Activated naive CD4-positive, alpha-beta T cell treated with anti-CD3 and anti-CD28 coated beads for 36 hours (primary cell): ENCODE measurements at regions of chr5 and their contacts with region 1.

Region 1: DNA sequence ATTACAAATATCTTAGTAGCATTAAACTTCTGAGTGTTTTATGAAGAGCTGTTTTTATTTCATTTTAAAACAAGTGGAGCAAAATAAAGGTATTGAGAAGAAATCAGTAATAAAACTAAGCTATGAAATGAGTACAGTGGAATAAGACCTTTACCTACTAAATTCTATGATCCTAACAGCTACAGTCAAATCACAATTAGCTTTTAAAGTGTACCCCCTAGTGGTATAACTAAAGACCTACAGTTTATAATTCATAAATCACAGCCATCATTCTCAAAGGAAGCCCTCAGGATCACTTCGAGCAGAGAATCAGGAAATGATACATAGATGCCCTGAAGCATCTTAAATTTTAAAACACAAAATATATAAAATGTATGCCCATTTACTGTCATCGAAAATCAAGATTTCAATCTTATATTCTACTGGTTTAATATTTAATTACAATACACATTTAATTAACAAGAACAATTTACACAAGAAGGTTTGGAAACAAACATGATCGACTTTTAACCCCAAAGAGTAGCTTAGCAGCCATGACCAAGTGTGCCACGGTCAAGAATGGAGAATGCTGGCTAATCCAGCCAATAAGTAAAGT is 12.3 kb downstream of the CCNH start:
- DNase-seq: no peak
- H3K4me3 Mint-ChIP-seq: no peak overlapping the region
- H3K27ac Mint-ChIP-seq: no peak overlapping the region
- H3K4me1 Mint-ChIP-seq: peaks cover 34% of the 10 kb centered on the region
- H3K27me3 Mint-ChIP-seq: no peaks in the 10 kb centered on the region

Region 2: GRCh38 chr5:86880785-86881492 is 519.5 kb before region 1 on chr5:
- CTCF ChIA-PET with region 1: interaction called, 5 read pairs
- intact Hi-C with region 1: loop called (anchors 1 kb)
- DNase-seq: peak; percentile 58
- H3K4me3 Mint-ChIP-seq: no peak overlapping the region
- H3K27ac Mint-ChIP-seq: no peak overlapping the region
- H3K4me1 Mint-ChIP-seq: no peaks in the 10 kb centered on the region
- H3K27me3 Mint-ChIP-seq: peaks cover 6% of the 10 kb centered on the region

Region 3: GRCh38 chr5:86986837-86987236 is 413.6 kb before region 1 on chr5:
- CTCF ChIA-PET with region 1: interaction called, 5 read pairs
- intact Hi-C with region 1: loop called (anchors 2 kb)
- DNase-seq: no peak
- H3K4me3 Mint-ChIP-seq: no peak overlapping the region
- H3K27ac Mint-ChIP-seq: no peak overlapping the region
- H3K4me1 Mint-ChIP-seq: no peaks in the 10 kb centered on the region
- H3K27me3 Mint-ChIP-seq: no peaks in the 10 kb centered on the region

Region 4: GRCh38 chr5:87048156-87048555 is 352.2 kb before region 1 on chr5:
- CTCF ChIA-PET with region 1: no interaction called
- intact Hi-C with region 1: loop called (anchors 1 kb)
- DNase-seq: no peak
- H3K4me3 Mint-ChIP-seq: no peak overlapping the region
- H3K27ac Mint-ChIP-seq: no peak overlapping the region
- H3K4me1 Mint-ChIP-seq: no peaks in the 10 kb centered on the region
- H3K27me3 Mint-ChIP-seq: no peaks in the 10 kb centered on the region

Region 5: GRCh38 chr5:87340716-87341115 is 59.7 kb before region 1 on chr5:
- CTCF ChIA-PET with region 1: no interaction called
- intact Hi-C with region 1: no loop called
- DNase-seq: no peak
- H3K4me3 Mint-ChIP-seq: peak overlapping the region; percentile 33
- H3K27ac Mint-ChIP-seq: peak overlapping the region; percentile 77
- H3K4me1 Mint-ChIP-seq: peaks cover 20% of the 10 kb centered on the region
- H3K27me3 Mint-ChIP-seq: no peaks in the 10 kb centered on the region

Region 6: DNA sequence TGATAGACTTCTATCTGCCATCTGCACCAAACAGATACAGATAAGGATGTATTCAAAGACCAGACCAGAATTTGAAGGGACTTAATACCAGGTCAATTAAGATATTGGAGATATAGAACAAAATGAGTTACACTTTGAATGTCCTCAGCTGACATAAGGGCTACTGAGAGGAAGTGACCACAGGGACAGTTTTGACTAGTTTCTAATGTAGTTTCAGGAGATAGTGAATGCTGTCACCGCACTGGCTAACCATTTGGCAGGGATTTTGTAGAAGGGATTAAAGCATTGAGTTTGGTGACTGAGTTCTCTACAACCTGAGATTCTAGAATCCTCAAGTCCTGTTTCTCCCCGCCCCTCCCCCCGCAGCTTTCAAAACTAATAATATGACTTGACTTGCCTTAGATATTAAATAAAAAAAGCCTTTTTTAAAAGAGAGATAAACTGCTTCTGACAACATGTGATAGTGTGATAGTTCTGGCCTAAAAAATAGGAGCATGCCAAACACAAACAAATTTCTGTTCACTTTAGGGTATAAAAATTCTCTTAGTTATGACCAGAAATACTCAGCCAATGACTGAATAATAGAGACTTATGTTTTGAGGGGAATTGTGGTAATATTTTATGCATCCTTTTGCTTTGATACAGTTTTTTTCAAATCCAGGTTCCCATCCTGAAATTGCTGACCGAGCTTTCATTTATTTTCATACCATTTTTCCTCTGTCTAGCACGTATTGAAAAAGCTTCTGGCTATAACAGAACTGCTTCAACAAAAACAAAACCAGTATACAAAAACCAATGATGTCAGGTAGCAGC is 10.1 kb before region 1 on chr5:
- CTCF ChIA-PET with region 1: interaction called, 19 read pairs
- intact Hi-C with region 1: no loop called
- DNase-seq: no peak
- H3K4me3 Mint-ChIP-seq: no peak overlapping the region
- H3K27ac Mint-ChIP-seq: peak overlapping the region; percentile 1
- H3K4me1 Mint-ChIP-seq: peaks cover 6% of the 10 kb centered on the region
- H3K27me3 Mint-ChIP-seq: no peaks in the 10 kb centered on the region

Region 7: DNA sequence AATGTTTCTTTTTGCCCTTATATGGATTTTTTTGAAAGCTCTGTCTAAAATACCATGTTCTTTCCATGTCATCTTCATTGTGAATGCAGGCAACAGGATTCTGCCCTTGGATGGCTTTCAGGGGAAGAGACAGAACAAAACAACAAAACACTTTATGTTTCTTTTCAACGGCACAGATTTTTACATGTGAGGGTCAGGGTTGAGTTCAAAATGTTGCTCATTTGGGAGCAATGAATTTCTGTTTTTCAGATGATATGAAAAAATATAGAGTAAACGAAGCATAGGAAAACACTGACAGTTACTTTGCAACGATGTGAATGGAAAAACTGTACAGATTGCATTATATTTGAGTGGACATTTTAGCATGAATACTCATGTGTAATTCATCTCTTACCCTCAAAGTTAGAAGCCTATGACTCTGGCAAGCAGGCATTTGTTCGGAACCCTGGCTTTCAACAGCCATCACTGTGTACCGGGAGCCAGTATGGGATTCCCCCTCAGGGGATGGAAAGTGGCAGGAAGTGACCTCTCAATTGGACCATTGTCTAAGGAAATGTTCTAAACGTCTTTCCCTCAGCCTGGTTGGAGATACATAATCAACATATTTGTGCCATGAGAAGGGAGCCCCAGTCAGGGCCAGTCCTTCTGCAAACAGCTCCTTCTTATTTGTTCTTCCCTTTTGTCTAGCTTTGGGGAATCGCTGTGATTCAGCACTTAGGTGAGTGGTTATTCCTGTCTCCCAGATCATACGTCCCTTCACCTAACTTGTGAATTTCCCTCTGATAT is 1636.5 kb after region 1 on chr5:
- CTCF ChIA-PET with region 1: no interaction called
- intact Hi-C with region 1: no loop called
- DNase-seq: no peak
- H3K4me3 Mint-ChIP-seq: no peak overlapping the region
- H3K27ac Mint-ChIP-seq: no peak overlapping the region
- H3K4me1 Mint-ChIP-seq: no peaks in the 10 kb centered on the region
- H3K27me3 Mint-ChIP-seq: no peaks in the 10 kb centered on the region